Heart left ventricle (tissue), 16 donors: ENCODE measurements at regions of chr12 and their contacts with region 1.

Region 1: DNA sequence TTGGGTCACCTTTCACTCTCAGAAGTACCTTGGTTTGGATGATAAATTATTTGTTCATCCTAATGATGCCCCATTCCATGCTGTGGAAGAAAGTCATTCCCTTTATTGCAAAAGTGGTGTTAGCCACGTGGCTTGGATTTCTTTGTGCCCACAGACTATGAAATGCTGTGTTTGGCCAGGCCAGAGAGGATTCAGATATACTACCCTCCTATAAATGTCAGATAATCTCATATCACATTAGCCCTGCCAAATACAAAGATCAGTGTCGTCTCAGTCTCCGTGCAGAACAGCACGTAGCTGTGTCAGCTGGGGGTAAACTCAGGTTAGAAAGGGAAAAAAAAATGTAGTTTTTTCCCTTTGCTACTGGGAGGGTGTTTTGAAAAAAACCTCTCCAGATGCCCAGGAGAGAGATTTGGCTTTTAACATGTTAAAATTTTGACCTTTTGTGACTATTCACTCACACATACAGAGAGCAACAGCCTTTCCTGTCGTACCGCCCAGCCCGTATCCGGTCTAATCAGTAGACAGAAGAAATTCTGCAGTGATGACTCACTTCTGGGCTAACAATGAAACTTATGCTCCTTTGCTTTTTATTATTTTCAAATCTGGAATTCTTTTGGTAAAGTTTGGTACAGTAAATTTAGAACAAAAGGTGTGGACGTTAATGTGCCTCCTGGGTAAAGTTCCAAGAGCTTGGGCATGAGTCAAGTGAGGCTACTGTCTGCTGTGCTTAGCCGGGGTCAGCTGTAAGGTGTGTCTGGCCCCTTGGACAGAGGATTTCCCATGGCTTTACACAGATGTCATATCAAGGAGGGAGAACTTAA is 8.5 kb upstream of the PTPRB start:
- DNase-seq: peak; percentile 63 to 78 (median 69)
- ATAC-seq: peak; percentile 87 to 97 (median 94)
- H3K4me3 ChIP-seq: peak overlapping the region in 1 of 12 donors; percentile 0
- H3K27ac ChIP-seq: peak overlapping the region in 10 of 12 donors; percentile 8 to 68 (median 52)
- H3K4me1 ChIP-seq: peaks cover 0 to 50% (median 30%) of the 10 kb centered on the region in 12 donors
- H3K27me3 ChIP-seq: no peaks in the 10 kb centered on the region
- CTCF ChIP-seq: no peak
- POLR2A ChIP-seq: no peak

Region 2: GRCh38 chr12:70590051-70590450 is 55.7 kb before region 1 on chr12:
- intact Hi-C with region 1: loop called in 3 of 10 experiments (anchors 5 to 10 kb)
- DNase-seq: peak; percentile 63 to 77 (median 66)
- ATAC-seq: peak; percentile 64 to 82 (median 76)
- H3K4me3 ChIP-seq: no peak overlapping the region
- H3K27ac ChIP-seq: no peak overlapping the region
- H3K4me1 ChIP-seq: peaks cover 0 to 15% (median 0%) of the 10 kb centered on the region in 12 donors
- H3K27me3 ChIP-seq: no peaks in the 10 kb centered on the region
- CTCF ChIP-seq: peak; percentile 71 to 93 (median 82)
- POLR2A ChIP-seq: no peak

Region 3: GRCh38 chr12:70598467-70599193 is 47.1 kb before region 1 on chr12:
- intact Hi-C with region 1: loop called in 3 of 10 experiments (anchors 5 to 10 kb)
- DNase-seq: peak in 2 of 5 donors; percentile 45 to 66
- ATAC-seq: peak; percentile 58 to 91 (median 68)
- H3K4me3 ChIP-seq: peak overlapping the region in 6 of 12 donors; percentile 4 to 35 (median 20)
- H3K27ac ChIP-seq: peak overlapping the region in 9 of 12 donors; percentile 11 to 61 (median 28)
- H3K4me1 ChIP-seq: peaks cover 0 to 23% (median 0%) of the 10 kb centered on the region in 12 donors
- H3K27me3 ChIP-seq: no peaks in the 10 kb centered on the region
- CTCF ChIP-seq: no peak
- POLR2A ChIP-seq: no peak

Region 4: GRCh38 chr12:70609711-70610491 is 35.8 kb before region 1 on chr12:
- intact Hi-C with region 1: loop called in 5 of 10 experiments (anchors 5 kb)
- DNase-seq: peak; percentile 70 to 78 (median 77)
- ATAC-seq: peak; percentile 73 to 91 (median 89)
- H3K4me3 ChIP-seq: peak overlapping the region; percentile 24 to 73 (median 60)
- H3K27ac ChIP-seq: peak overlapping the region; percentile 68 to 90 (median 78)
- H3K4me1 ChIP-seq: peaks cover 0 to 40% (median 13%) of the 10 kb centered on the region in 12 donors
- H3K27me3 ChIP-seq: peaks cover 0 to 21% (median 0%) of the 10 kb centered on the region in 9 donors
- CTCF ChIP-seq: no peak
- POLR2A ChIP-seq: peak in 1 of 2 donors; percentile 59